Common myeloid progenitor, CD34-positive (primary cell): ENCODE measurements at regions of chr6 and their contacts with region 1.

Region 1: DNA sequence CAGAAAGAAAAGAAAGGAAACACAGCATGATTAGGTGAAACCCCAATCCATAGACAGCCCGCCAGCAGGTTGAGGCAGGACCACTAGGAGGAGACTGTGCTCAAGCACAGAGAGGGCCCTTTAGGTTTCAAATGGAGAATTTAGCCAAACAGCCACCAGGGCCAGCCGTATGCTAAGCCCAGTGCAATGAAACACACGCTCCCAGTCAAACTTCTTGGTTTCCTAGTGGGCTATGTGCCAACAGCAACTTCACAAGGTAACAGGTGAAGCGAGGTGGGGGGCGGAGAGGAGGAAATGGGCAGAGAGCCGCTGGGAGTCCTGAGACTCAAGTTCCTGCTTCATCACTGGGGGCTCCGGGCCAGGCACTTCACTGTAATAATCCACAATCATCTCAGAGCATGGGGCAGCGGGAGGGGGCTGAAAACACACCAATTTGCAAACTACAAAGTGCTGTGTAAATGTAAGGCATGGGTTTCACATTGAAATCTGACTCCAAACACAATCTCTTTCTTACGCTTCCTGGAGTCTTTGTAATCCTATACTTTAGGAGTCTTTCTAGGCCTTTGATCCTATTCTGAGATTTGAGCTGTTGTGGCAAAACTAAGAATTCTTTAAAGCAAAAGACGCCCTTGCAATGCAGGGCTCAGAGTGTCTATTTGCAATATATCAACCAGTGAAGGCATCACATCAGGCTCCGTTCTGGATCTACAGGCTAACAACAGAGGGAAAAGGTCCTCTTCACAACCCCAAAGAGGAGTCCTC is 117.3 kb downstream of the OPRM1 start:
- DNase-seq: peak; percentile 64 to 71 (median 67)
- H3K4me3 ChIP-seq: peak overlapping the region in 3 of 7 experiments; percentile 3 to 67 (median 41)
- H3K27ac ChIP-seq: no peak overlapping the region
- H3K4me1 ChIP-seq: peaks cover 10 to 27% (median 19%) of the 10 kb centered on the region in 4 experiments
- H3K27me3 ChIP-seq: no peaks in the 10 kb centered on the region

Region 2: DNA sequence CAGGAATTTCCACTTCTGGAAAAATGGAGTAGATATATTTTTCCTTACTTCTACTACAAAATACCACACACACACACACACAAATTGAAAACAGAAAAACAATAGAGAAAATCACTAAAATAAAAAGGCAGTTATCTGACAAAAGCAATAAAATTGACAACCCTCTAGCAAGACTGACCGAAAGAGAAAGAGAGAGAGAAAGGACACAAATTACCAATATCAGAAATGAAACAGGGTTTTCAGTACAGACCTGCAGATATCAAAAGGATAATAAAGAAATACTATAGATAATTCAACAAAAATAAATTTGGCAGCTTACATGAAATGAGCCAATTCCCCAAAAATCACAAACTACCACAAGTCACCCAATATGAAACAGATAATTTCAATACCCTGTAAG is 12.6 kb before region 1 on chr6:
- CTCF ChIA-PET with region 1: interaction called, 11 read pairs
- POLR2A ChIA-PET with region 1: no interaction called
- DNase-seq: no peak
- H3K4me3 ChIP-seq: no peak overlapping the region
- H3K27ac ChIP-seq: no peak overlapping the region
- H3K4me1 ChIP-seq: peaks cover 0 to 6% (median 0%) of the 10 kb centered on the region in 4 experiments
- H3K27me3 ChIP-seq: no peaks in the 10 kb centered on the region

Region 3: GRCh38 chr6:154276810-154277628 is 120.7 kb after region 1 on chr6:
- CTCF ChIA-PET with region 1: interaction called, 47 read pairs
- POLR2A ChIA-PET with region 1: no interaction called
- DNase-seq: peak; percentile 53 to 72 (median 68)
- H3K4me3 ChIP-seq: peak overlapping the region in 1 of 7 experiments; percentile 37
- H3K27ac ChIP-seq: no peak overlapping the region
- H3K4me1 ChIP-seq: peaks cover 4 to 32% (median 7%) of the 10 kb centered on the region in 4 experiments
- H3K27me3 ChIP-seq: no peaks in the 10 kb centered on the region

Region 4: DNA sequence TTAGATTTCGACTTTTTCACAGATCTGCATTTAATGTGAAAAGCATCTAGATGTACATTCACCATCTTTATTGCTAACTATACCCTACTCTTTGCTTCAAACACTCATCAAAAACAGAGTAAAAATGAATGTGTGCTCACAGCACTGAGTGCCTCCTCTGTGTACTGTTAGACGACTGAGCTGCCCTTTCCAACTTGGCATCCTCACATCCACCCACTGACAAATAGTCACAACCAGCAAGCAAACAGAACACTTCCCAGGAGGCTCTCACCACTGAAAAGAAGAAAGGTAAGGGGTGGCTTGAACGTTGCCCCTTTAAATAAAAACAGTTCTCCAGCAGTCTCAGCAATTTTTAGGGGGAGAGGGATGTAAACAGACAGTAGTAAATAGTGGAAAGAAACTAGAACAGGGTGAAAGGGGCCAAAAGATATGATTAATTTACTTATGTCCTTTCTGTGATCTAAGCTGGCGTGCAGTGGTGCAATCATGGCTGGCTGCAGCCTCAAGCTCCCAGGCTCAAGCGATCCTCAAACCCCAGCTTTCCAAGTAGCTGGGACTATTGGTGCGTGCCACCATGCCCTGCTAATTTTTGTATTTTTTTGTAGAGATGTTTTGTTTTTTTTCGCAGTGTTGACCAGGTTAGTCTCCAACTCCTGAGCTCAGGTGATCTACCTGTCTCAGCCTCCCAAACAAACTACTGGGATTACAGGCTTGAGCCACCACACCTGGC is 151.5 kb after region 1 on chr6:
- CTCF ChIA-PET with region 1: no interaction called
- POLR2A ChIA-PET with region 1: no interaction called
- DNase-seq: no peak
- H3K4me3 ChIP-seq: no peak overlapping the region
- H3K27ac ChIP-seq: no peak overlapping the region
- H3K4me1 ChIP-seq: peaks cover 0 to 14% (median 2%) of the 10 kb centered on the region in 4 experiments
- H3K27me3 ChIP-seq: no peaks in the 10 kb centered on the region

Region 5: DNA sequence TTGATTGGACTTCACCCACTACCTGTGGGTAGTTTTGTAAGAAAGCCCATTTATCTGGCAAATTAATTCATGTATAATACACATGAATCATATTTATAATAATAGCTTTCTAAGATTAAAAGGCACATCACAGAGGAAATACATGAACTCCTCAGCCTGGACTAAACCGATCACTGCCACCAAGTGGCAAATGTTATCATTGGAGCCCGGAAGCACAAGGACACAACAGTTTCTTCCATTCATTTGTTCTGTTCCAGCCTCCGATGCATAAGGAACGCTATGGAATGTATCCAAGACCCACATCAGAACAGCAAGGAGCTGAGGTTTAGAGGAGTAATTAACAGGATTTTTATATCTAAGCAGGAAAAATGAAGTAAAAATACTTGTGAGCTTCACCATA is 214.2 kb after region 1 on chr6:
- CTCF ChIA-PET with region 1: interaction called, 46 read pairs
- POLR2A ChIA-PET with region 1: no interaction called
- DNase-seq: peak in 2 of 3 donors; percentile 65 to 72
- H3K4me3 ChIP-seq: peak overlapping the region in 1 of 7 experiments; percentile 52
- H3K27ac ChIP-seq: no peak overlapping the region
- H3K4me1 ChIP-seq: peaks cover 0 to 7% (median under 1%) of the 10 kb centered on the region in 4 experiments
- H3K27me3 ChIP-seq: no peaks in the 10 kb centered on the region